ENCODE measurements at regions of chr11 and their contacts with region 1.

Region 1: GRCh38 chr11:32105871-32106560 is 15.1 kb downstream of the RCN1 start:
- DNase-seq: peak; percentile 81
- ATAC-seq: peak; percentile 91
- H3K4me3 ChIP-seq: peak overlapping the region; percentile 33
- H3K27ac ChIP-seq: peak overlapping the region; percentile 82
- H3K4me1 ChIP-seq: peaks cover 22% of the 10 kb centered on the region
- H3K27me3 ChIP-seq: no peaks in the 10 kb centered on the region
- CTCF ChIP-seq: no peak
- EP300 ChIP-seq: peak; percentile 82
- POLR2A ChIP-seq: no peak; the same call in 1 of the 2 replicates
- RAD21 ChIP-seq: no peak

Region 2: GRCh38 chr11:32090545-32091373 is 15.3 kb before region 1 on chr11 and contains the start of gene RCN1:
- CTCF ChIA-PET with region 1: interaction called, 5 read pairs
- POLR2A ChIA-PET with region 1: interaction called, 11 read pairs
- RAD21 ChIA-PET with region 1: interaction called, 4 read pairs
- SMC1A ChIA-PET with region 1: interaction called, 8 read pairs
- in situ Hi-C with region 1: no loop called
- intact Hi-C with region 1: loop called (anchors 2 kb)
- DNase-seq: no peak
- ATAC-seq: peak; percentile 80
- H3K4me3 ChIP-seq: peak within 1 kb of the TSS; percentile 94
- H3K27ac ChIP-seq: peak within 1 kb of the TSS; percentile 95
- H3K4me1 ChIP-seq: peaks cover 13% of the 10 kb centered on the region
- H3K27me3 ChIP-seq: no peaks in the 10 kb centered on the region
- CTCF ChIP-seq: no peak
- EP300 ChIP-seq: no peak
- POLR2A ChIP-seq: peak; percentile 78
- RAD21 ChIP-seq: no peak
- polyA plus RNA-seq, gene RCN1: 17.6 to 37.4 TPM